Ascending aorta (tissue), 2 donors: ENCODE measurements at regions of chr18 and their contacts with region 1.

Region 1: GRCh38 chr18:62437235-62438017 is 85.4 kb upstream of the ZCCHC2 start:
- DNase-seq: peak; percentile 86 to 98
- H3K4me3 ChIP-seq: peak overlapping the region; percentile 39 to 52
- H3K27ac ChIP-seq: peak overlapping the region; percentile 85 to 94
- H3K4me1 ChIP-seq: peaks cover 4 to 19% of the 10 kb centered on the region in 2 donors
- H3K27me3 ChIP-seq: no peaks in the 10 kb centered on the region
- CTCF ChIP-seq: no peak

Region 2: DNA sequence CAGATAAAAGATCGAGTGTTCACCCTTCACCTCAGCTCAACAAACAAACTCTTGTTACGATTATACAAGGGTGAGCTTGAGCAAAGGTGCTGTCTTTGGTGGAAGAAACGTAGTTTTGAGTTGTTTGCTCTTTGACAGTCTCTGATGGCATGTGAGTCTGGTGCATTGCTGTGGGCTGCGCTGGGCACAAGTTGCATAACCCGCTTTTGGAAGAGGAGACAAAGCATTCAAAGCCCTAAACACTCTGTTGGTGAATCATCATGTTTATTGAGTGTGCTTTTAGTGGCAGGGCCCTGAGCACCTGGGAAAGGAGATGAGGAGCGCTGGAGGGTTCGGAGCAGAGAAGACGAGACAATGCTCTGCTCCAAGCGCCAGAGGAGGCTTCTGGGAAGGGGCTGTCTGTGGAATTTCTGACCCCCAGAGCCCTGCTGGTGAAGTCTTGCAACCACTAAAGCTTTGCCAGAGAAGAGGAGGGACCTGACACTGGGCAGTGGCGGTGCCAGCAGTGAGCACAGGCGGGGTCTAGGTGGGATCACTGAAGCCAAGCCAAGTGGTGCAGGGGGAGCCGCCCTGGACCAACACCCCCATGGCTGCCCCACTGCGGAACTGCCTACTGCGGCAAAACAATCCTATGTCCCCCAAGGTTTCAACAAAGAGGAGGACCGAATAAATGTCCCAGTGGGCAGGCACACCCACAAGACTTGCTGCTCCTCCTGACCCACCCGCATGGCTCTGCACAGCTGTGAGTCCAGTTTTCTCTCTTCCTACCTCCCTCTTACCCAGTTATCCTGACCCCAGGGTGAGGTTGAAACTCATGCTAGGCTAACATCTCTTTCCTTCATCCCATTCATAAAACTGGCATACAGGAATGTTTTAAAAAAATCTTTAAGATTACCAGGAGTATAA is 48.3 kb before region 1 on chr18:
- intact Hi-C with region 1: no loop called
- DNase-seq: no peak
- H3K4me3 ChIP-seq: no peak overlapping the region
- H3K27ac ChIP-seq: no peak overlapping the region
- H3K4me1 ChIP-seq: no peaks in the 10 kb centered on the region
- H3K27me3 ChIP-seq: no peaks in the 10 kb centered on the region
- CTCF ChIP-seq: no peak

Region 3: DNA sequence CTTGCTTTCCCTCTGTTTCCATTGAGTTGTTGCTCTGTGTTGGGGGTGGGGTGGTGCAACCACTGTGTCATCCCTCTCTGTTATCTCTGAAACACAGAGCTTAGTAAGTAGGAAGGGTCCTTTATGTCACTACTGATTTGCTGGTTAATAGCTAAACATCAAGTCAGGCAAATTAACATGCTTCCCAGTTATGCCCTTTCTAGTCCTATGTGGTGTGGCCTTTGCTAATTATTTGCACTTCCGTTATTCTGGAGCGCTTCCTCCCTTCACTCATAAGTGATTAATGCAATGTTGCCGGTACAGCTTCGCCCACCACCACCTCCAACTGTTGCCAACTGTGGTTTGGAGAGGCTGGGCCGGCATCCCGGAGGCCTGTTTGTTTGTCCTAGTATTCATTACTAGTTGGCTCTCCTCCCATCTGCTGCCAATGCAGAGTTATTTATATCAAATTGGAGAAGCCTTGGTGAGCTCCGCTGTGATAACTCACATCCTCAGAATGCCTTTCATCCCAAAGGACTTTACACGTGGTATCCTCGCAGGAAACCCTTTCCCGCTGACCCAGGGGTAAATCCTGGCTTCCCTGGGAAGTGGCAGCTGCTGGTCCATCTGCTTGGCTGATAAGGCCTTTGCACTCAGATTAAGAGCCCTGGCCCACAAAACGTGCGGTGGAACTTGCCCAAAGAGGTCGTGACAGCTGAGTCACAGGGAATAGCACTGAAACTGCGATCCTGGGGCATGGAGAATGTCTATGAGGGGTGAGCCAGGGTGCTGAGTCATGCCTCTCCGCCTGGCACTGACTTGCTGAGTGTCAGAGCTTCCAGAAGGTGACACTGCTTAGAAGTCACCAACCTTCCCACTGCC is 13.3 kb after region 1 on chr18:
- intact Hi-C with region 1: loop called (anchors 1 kb)
- DNase-seq: peak; percentile 74 to 92
- H3K4me3 ChIP-seq: peak overlapping the region in 1 of 2 donors; percentile 1
- H3K27ac ChIP-seq: peak overlapping the region; percentile 28 to 62
- H3K4me1 ChIP-seq: peaks cover 0 to 10% of the 10 kb centered on the region in 2 donors
- H3K27me3 ChIP-seq: no peaks in the 10 kb centered on the region
- CTCF ChIP-seq: no peak

Region 4: DNA sequence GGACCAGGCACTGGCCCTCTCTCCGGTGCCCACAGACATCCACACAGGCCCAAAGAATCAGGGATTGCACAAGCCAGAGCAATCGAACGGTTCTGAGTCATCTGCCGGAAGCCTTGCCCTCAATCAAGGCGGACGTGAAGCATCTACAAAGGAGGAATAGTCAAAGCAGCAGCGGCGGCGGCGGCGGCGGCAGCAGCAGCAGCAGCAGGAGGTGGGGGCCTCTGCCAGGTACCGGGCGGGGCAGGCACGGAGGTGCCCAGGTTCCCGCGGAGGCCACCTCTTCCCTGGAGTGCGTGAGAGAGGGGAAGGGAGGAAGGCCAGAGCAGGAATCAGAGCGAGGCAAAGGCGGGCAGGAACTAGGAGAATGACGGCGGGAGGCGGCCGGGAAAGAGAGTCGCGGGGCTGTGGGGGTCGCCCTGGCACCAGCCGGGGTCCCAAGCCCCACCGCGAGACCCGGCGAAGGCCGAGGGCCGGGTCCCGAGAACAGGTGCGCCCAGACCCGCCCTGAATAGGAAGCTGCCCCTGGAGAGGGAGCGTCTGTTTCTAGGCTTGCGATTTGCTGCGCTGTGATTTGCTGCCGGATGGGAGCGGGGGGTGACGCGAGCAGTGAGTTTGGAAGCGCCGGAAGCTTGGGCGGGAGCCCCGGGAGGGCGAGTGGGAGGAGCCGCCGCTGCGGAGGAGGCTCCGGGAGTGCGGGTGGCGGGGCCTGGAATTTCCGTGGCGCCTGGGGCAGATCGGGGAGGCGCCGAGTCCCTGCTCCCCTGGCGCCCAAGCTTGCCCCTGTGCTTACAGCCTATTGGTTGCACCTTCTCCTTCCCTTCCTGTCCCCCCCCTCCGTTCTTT is 1532.8 kb after region 1 on chr18 and contains the start of gene SERPINB8:
- intact Hi-C with region 1: loop called (anchors 10 kb)
- DNase-seq: peak; percentile 76 to 98
- H3K4me3 ChIP-seq: peak within 1 kb of the TSS; percentile 77 to 80
- H3K27ac ChIP-seq: peak within 1 kb of the TSS; percentile 97 to 99
- H3K4me1 ChIP-seq: peaks cover 0 to 4% of the 10 kb centered on the region in 2 donors
- H3K27me3 ChIP-seq: no peaks in the 10 kb centered on the region
- CTCF ChIP-seq: no peak
- total RNA-seq, gene SERPINB8: 4.5 TPM